SK-N-SH (cell line): ENCODE measurements at regions of chr14 and their contacts with region 1.

Region 1: DNA sequence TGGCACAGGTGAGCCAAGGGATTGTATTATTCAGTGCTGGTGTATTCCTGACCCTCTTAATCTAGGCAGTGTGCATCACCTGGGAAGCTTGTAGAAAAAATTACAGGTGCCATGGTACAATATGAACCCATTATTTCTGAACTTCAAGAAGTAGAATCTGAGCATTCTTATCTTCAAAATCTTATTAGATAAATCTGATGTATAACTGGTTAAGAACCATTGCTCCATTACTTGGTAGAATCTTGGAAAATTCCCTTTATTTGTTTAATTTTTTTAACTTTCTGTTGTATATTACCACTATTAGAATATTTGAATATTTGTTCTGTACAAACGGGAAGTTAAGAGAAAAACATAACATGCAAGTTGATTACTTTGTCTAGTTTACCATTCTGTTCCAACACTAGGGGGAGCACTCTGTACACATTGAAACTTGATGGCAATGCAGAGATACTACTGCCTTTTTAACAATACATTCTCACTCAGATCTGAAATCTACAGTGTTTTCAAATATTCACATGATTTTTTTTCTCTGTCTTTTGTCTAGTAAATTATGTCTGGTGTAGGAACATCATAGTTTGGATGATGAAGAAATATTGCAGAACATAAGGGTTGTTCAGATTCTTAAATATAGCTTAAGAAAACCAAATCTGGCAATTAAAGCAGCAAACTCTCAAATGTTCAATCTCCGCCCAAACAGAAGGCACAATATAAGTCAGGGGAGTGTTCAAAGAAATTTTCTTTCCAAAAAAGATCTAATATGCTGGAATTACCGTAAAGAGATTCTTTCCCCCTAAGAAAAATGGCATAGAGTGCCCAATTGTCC is 196.6 kb downstream of the PCNX1 start:
- DNase-seq: peak; percentile 46
- H3K4me3 ChIP-seq: no peak overlapping the region; a peak in 1 of 4 replicates
- H3K27ac ChIP-seq: peak overlapping the region in 1 of 2 experiments; percentile 6; a peak in 1 of 4 replicates
- H3K4me1 ChIP-seq: no peaks in the 10 kb centered on the region
- H3K27me3 ChIP-seq: no peaks in the 10 kb centered on the region
- CTCF ChIP-seq: peak; percentile 93
- EP300 ChIP-seq: no peak
- RAD21 ChIP-seq: peak; percentile 79

Region 2: GRCh38 chr14:71076466-71077092 is 27.3 kb before region 1 on chr14:
- CTCF ChIA-PET with region 1: interaction called, 10 read pairs
- POLR2A ChIA-PET with region 1: no interaction called
- DNase-seq: no peak
- H3K4me3 ChIP-seq: no peak overlapping the region
- H3K27ac ChIP-seq: no peak overlapping the region
- H3K4me1 ChIP-seq: no peaks in the 10 kb centered on the region
- H3K27me3 ChIP-seq: no peaks in the 10 kb centered on the region
- CTCF ChIP-seq: no peak
- EP300 ChIP-seq: no peak
- RAD21 ChIP-seq: no peak

Region 3: GRCh38 chr14:71089971-71090370 is 13.9 kb before region 1 on chr14:
- CTCF ChIA-PET with region 1: interaction called, 13 read pairs
- POLR2A ChIA-PET with region 1: no interaction called
- DNase-seq: no peak
- H3K4me3 ChIP-seq: no peak overlapping the region
- H3K27ac ChIP-seq: no peak overlapping the region
- H3K4me1 ChIP-seq: peaks cover 0 to 5% of the 10 kb centered on the region in 2 experiments; a peak in 1 of 4 replicates
- H3K27me3 ChIP-seq: no peaks in the 10 kb centered on the region
- CTCF ChIP-seq: no peak
- EP300 ChIP-seq: no peak
- RAD21 ChIP-seq: no peak

Region 4: GRCh38 chr14:71117839-71118743 is 14.2 kb after region 1 on chr14:
- CTCF ChIA-PET with region 1: interaction called, 59 read pairs
- POLR2A ChIA-PET with region 1: no interaction called
- DNase-seq: no peak
- H3K4me3 ChIP-seq: no peak overlapping the region
- H3K27ac ChIP-seq: peak overlapping the region in 1 of 2 experiments; percentile 7; a peak in 1 of 4 replicates
- H3K4me1 ChIP-seq: peaks cover 4 to 8% of the 10 kb centered on the region in 2 experiments; a peak in 2 of 4 replicates
- H3K27me3 ChIP-seq: no peaks in the 10 kb centered on the region
- CTCF ChIP-seq: no peak
- EP300 ChIP-seq: no peak
- RAD21 ChIP-seq: no peak

Region 5: GRCh38 chr14:71855399-71856036 is 751.6 kb after region 1 on chr14:
- CTCF ChIA-PET with region 1: interaction called, 29 read pairs
- POLR2A ChIA-PET with region 1: no interaction called
- DNase-seq: peak; percentile 65
- H3K4me3 ChIP-seq: no peak overlapping the region; a peak in 1 of 4 replicates
- H3K27ac ChIP-seq: no peak overlapping the region
- H3K4me1 ChIP-seq: no peaks in the 10 kb centered on the region; a peak in 2 of 4 replicates
- H3K27me3 ChIP-seq: no peaks in the 10 kb centered on the region
- CTCF ChIP-seq: peak; percentile 83
- EP300 ChIP-seq: no peak
- RAD21 ChIP-seq: peak; percentile 79